ENCODE measurements at regions of chr3 and their contacts with region 1.

Region 1: GRCh38 chr3:63993653-63994079 is 29.6 kb downstream of the PSMD6 start:
- DNase-seq: peak; percentile 33 to 79 (median 57)
- ATAC-seq: peak; percentile 86 to 89
- H3K4me3 Mint-ChIP-seq: peak overlapping the region in 1 of 10 donors; percentile 28
- H3K27ac Mint-ChIP-seq: peak overlapping the region; percentile 44 to 92 (median 82)
- H3K4me1 Mint-ChIP-seq: peaks cover 23 to 59% (median 38%) of the 10 kb centered on the region in 4 donors
- H3K27me3 Mint-ChIP-seq: no peaks in the 10 kb centered on the region

Region 2: DNA sequence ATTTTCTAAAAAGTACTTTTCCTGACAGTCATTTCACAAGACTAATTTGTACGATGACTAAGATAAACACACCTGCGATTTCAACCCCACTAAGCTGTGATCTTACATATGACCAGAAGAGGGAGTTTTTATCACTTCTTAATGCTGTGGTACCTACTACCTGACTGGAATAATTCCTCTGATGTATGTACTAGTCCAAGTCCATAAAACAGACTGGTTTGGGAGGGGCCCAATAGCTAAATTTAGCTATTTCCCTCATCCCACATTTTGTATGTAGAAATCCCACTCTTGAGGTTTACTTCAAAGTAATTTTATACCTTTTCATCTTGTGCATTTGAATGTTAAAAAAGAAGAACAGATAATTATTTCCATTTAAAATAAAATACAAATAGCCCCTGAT is 31.8 kb before region 1 on chr3:
- POLR2A ChIA-PET with region 1: interaction called, 22 read pairs
- DNase-seq: peak in 5 of 10 donors; percentile 14 to 72 (median 68)
- ATAC-seq: peak; percentile 95 to 98
- H3K4me3 Mint-ChIP-seq: no peak overlapping the region
- H3K27ac Mint-ChIP-seq: peak overlapping the region in 6 of 10 donors; percentile 31 to 71 (median 50)
- H3K4me1 Mint-ChIP-seq: peaks cover 11 to 47% (median 34%) of the 10 kb centered on the region in 4 donors
- H3K27me3 Mint-ChIP-seq: no peaks in the 10 kb centered on the region

Region 3: GRCh38 chr3:63975723-63976122 is 17.9 kb before region 1 on chr3:
- POLR2A ChIA-PET with region 1: interaction called, 15 read pairs
- DNase-seq: no peak
- ATAC-seq: no peak
- H3K4me3 Mint-ChIP-seq: peak overlapping the region in 9 of 10 donors; percentile 43 to 81 (median 55)
- H3K27ac Mint-ChIP-seq: peak overlapping the region; percentile 66 to 96 (median 90)
- H3K4me1 Mint-ChIP-seq: peaks cover 36 to 97% (median 95%) of the 10 kb centered on the region in 4 donors
- H3K27me3 Mint-ChIP-seq: no peaks in the 10 kb centered on the region

Measured in naive thymus-derived CD8-positive, alpha-beta T cell (primary cell).